ENCODE measurements at regions of chr12 and their contacts with region 1.

Region 1: GRCh38 chr12:122225683-122226407 is at the start of gene DIABLO:
- DNase-seq: peak; percentile 100
- H3K4me3 ChIP-seq: peak within 1 kb of the TSS; percentile 93
- H3K27ac ChIP-seq: peak within 1 kb of the TSS; percentile 91
- H3K4me1 ChIP-seq: peaks cover 19% of the 10 kb centered on the region
- H3K27me3 ChIP-seq: no peaks in the 10 kb centered on the region
- CTCF ChIP-seq: no peak
- total RNA-seq, gene DIABLO: 72.0 and 72.2 TPM in 2 replicates

Region 2: DNA sequence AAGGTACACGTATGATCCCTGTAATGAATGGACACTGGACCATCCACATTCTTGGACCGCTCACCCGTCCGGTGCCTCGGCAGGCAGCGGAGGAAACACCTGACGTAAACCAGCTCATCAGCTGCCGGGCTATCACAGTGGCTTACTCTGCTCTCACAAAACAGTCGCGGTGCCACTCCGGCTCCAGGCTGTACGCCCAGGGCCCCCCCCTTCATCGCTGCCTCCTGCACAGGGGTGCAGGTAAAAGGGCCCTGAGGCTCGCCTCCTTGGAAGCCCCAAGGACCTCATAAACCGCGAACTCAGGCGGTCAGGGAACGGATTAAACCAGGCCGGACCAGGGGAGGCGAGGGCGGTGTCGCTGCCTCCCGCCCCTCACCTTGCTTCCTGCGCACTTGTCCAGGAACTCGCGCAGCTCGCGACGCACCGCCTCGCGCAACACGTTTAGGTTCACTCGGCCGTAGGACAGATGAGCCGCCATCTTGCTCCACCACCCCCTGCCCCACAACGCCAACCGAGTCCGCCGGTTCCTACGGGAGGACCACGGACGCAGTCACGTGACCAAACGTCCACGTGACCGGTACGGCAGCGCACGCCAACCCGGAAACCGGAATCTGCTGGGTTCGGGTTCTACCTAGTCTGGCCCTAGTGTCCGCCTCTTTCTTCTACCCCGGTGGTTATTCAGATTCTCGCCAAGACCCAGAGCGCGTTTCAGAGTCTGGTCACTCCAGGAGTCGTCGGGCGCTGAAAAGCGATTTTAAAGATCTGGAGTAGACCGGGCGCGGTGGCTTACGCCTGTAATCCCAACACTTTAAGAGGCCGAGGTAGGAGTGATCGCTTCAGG is 40.3 kb after region 1 on chr12 and contains the start of gene VPS33A:
- CTCF ChIA-PET with region 1: no interaction called
- POLR2A ChIA-PET with region 1: no interaction called
- intact Hi-C with region 1: loop called (anchors 1 kb)
- DNase-seq: peak; percentile 98
- H3K4me3 ChIP-seq: peak within 1 kb of the TSS; percentile 77
- H3K27ac ChIP-seq: peak within 1 kb of the TSS; percentile 78
- H3K4me1 ChIP-seq: no peaks in the 10 kb centered on the region
- H3K27me3 ChIP-seq: no peaks in the 10 kb centered on the region
- CTCF ChIP-seq: no peak
- total RNA-seq, gene VPS33A: 34.3 and 35.3 TPM in 2 replicates

Measured in A673 (cell line).